Right ventricle myocardium superior (tissue), 1 donor: ENCODE measurements at regions of chr4 and their contacts with region 1.

Region 1: DNA sequence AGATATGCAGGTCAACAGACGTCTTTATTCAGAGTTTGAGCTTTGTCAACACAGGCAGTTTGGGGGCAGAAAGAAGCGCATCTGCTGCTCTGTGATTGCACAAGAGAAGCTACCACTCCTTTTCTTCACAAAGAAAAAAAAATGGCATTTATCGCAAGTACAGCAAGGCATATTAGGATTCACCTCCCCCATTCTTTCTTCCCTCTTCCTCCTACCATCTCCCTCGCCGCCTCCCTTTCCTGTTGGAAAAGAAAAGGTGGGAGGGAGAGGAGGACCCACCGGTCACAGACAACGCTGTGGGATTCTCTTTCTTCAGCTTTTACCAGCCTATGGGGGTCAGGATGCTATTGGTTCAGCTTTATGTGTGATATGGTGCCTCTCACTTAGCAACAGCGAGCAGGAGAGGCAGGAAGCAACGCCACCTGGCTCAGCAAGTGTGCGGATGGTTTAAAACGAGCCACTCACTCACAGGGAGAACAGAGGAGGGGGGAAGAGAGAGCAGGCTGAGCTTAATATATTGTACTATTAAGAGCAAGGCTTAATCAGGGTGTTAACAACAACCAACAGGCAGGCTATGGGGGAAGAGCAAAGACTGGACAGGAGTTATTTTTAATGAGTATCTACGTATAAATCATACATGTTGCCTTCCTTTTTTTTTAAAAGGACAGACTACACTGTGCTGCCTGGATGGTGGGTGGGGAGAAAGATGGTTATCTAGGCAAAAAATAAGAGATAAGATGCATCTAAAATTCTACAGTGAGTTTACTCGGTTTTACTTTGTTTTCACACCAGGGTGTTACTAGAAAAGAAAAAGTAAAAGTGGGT is 104.7 kb downstream of the MAML3 start:
- DNase-seq: peak; percentile 46
- ATAC-seq: peak; percentile 77

Region 2: GRCh38 chr4:139728840-139729239 is 320.4 kb before region 1 on chr4:
- intact Hi-C with region 1: loop called (anchors 10 kb)
- DNase-seq: no peak
- ATAC-seq: no peak

Region 3: DNA sequence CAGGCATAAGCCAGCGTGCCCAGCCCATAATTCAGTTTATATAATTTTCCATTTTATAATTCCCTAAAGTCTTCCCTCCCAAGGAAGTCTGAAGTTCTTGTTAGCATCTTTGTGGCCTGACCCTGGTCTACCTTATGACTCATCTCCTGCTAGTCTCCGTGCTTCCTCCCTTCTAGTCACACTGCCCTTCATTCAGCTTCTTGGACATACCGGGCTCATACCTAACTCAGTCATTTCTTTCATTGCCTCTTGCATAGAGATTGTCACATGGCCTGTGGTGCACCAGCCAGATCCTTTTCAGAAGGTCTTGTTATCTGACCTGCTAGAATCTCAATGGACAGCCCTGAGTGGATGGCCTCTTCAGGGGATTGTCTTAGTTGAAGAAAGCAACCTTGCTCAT is 127.5 kb after region 1 on chr4:
- intact Hi-C with region 1: no loop called
- DNase-seq: no peak
- ATAC-seq: no peak